GM12878 (cell line): ENCODE measurements at regions of chrX and their contacts with region 1.

Region 1: GRCh38 chrX:149916745-149917378 is 12.5 kb upstream of the HSFX4 start:
- DNase-seq: peak; percentile 25
- ATAC-seq: peak; percentile 98
- H3K4me3 ChIP-seq: no peak overlapping the region
- H3K27ac ChIP-seq: peak overlapping the region; percentile 18; the same call in 1 of the 2 replicates
- H3K4me1 ChIP-seq: no peaks in the 10 kb centered on the region
- H3K27me3 ChIP-seq: no peaks in the 10 kb centered on the region
- CTCF ChIP-seq: peak in 2 of 3 experiments; percentile 14 to 35; a peak in 4 of 6 replicates
- EP300 ChIP-seq: no peak
- POLR2A ChIP-seq: 0 out of 2 replicates have a peak, but pooled peaks have one; percentile 23
- RAD21 ChIP-seq: peak; percentile 55

Region 2: GRCh38 chrX:149799938-149800337 is 116.9 kb before region 1 on chrX:
- CTCF ChIA-PET with region 1: no interaction called
- POLR2A ChIA-PET with region 1: no interaction called
- RAD21 ChIA-PET with region 1: interaction called, 10 read pairs
- SMC1A ChIA-PET with region 1: no interaction called
- in situ Hi-C with region 1: no loop called
- intact Hi-C with region 1: no loop called
- DNase-seq: no peak
- ATAC-seq: no peak
- H3K4me3 ChIP-seq: no peak overlapping the region
- H3K27ac ChIP-seq: peak overlapping the region; percentile 35; the same call in 1 of the 2 replicates
- H3K4me1 ChIP-seq: peaks cover 3% of the 10 kb centered on the region; the same call in 1 of the 2 replicates
- H3K27me3 ChIP-seq: no peaks in the 10 kb centered on the region
- CTCF ChIP-seq: no peak
- EP300 ChIP-seq: no peak
- POLR2A ChIP-seq: no peak
- RAD21 ChIP-seq: no peak

Region 3: GRCh38 chrX:149871940-149872339 is 44.9 kb before region 1 on chrX:
- CTCF ChIA-PET with region 1: interaction called, 12 read pairs
- POLR2A ChIA-PET with region 1: interaction called, 4 read pairs
- RAD21 ChIA-PET with region 1: interaction called, 3 read pairs
- SMC1A ChIA-PET with region 1: interaction called, 16 read pairs
- in situ Hi-C with region 1: no loop called
- intact Hi-C with region 1: no loop called
- DNase-seq: peak; percentile 13
- ATAC-seq: peak; percentile 98
- H3K4me3 ChIP-seq: no peak overlapping the region
- H3K27ac ChIP-seq: no peak overlapping the region
- H3K4me1 ChIP-seq: no peaks in the 10 kb centered on the region
- H3K27me3 ChIP-seq: no peaks in the 10 kb centered on the region
- CTCF ChIP-seq: peak; percentile 51 to 64 (median 52); a peak in 5 of 6 replicates
- EP300 ChIP-seq: no peak
- POLR2A ChIP-seq: no peak
- RAD21 ChIP-seq: peak; percentile 67

Region 4: DNA sequence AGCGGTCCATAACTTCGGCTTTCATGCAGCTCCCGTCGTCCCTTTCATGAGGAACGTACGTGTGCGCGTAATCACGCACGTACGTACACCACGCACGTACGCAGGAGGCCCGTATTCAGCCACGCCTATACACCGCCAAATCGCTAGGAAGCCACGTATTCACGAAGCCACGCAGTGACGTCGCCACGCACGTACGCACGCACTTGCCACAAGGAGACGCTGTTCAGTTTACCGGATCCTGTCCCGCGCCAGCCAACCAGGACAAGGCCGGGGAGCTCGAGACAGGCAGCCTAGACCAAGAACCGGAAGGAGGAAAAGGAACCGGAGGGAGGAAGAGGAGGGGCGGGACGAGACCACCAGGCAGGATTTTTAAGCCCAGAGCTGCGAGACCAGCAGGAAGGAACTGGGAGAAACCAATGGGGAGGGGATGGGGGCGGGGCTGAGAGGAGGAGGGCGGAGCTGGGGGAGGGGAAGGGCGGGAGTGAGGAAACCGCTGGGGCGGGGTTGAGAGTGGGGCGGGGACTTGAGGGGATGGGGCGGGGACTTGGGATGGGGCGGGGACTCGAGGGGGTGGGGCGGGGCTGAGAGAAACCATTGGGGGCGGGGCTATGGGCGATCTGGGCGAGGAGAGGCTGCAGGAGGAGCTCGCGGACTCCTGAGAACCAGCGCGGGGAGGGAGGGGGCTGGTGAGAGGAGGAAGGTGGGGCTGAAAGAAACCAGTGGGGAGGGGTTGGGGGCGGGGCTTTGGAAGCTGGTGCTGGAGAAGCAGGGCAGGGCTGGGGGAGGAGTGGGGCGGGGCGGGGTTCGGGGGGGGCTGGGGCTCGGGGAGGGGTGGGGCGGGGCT is 21.8 kb after region 1 on chrX and contains the start of gene EOLA2:
- CTCF ChIA-PET with region 1: interaction called, 3 read pairs
- POLR2A ChIA-PET with region 1: interaction called, 9 read pairs
- RAD21 ChIA-PET with region 1: interaction called, 14 read pairs
- SMC1A ChIA-PET with region 1: no interaction called
- in situ Hi-C with region 1: no loop called
- intact Hi-C with region 1: no loop called
- DNase-seq: peak; percentile 97
- ATAC-seq: peak; percentile 71
- H3K4me3 ChIP-seq: peak within 1 kb of the TSS; percentile 83
- H3K27ac ChIP-seq: peak within 1 kb of the TSS; percentile 69
- H3K4me1 ChIP-seq: no peaks in the 10 kb centered on the region
- H3K27me3 ChIP-seq: no peaks in the 10 kb centered on the region
- CTCF ChIP-seq: peak; percentile 53 to 61 (median 57); a peak in 5 of 6 replicates
- EP300 ChIP-seq: no peak
- POLR2A ChIP-seq: peak; percentile 47
- RAD21 ChIP-seq: no peak
- polyA plus RNA-seq, gene EOLA2: 26.9 to 37.0 TPM

Region 5: DNA sequence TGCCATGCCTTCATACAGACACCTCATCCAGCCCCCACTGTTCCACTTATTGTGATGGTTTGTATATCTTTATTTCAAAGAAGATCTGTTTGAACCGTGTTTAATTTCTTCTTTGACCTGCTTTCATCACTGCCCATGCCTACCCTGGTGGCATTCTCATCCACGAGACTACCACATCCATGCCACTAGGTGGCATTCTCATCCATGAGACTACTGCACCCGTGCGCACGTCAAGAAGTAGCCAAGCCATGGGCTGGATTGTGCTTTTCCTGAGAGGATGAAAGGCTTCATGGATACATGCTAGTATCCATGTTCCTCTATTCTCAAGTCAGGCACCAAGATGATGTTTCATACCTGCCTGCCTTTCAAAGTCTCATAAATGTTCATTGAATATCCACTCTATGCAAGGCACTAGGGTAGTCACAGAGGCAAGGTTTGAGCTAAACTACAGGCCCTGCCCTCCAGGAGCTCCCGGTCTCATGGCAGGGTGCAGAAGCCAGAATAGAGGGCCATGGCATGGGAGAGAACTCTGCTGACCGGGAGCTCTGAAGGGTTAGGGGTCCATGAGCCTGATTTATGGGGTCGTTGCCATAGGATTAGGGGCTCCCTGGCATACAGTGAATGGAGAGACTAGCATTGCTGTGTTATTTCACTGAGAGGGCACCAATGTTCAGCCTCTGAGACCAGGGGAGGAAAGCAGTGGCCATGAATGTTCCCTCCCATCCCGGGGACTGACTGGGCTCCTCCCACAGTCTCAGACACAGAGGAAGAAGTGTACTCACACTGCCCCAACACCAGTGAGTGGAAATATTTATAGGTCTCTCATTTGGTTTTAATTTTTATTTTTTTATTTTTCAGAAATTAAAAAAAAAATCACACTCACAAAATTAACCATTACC is 46.2 kb after region 1 on chrX:
- CTCF ChIA-PET with region 1: no interaction called
- POLR2A ChIA-PET with region 1: no interaction called
- RAD21 ChIA-PET with region 1: no interaction called
- SMC1A ChIA-PET with region 1: no interaction called
- in situ Hi-C with region 1: no loop called
- intact Hi-C with region 1: no loop called
- DNase-seq: peak; percentile 5
- ATAC-seq: peak; percentile 98
- H3K4me3 ChIP-seq: no peak overlapping the region
- H3K27ac ChIP-seq: no peak overlapping the region
- H3K4me1 ChIP-seq: no peaks in the 10 kb centered on the region
- H3K27me3 ChIP-seq: no peaks in the 10 kb centered on the region
- CTCF ChIP-seq: peak; percentile 70 to 76 (median 71)
- EP300 ChIP-seq: no peak
- POLR2A ChIP-seq: no peak
- RAD21 ChIP-seq: peak; percentile 76